PC-3 (cell line): ENCODE measurements at regions of chr22 and their contacts with region 1.

Region 1: GRCh38 chr22:45804986-45805325 is 133.3 kb downstream of the ATXN10 start:
- DNase-seq: peak; percentile 92
- ATAC-seq: peak; percentile 95
- H3K4me3 ChIP-seq: 0 out of 2 replicates have a peak overlapping the region, but pooled peaks have one; percentile 28
- H3K27ac ChIP-seq: peak overlapping the region; percentile 79
- H3K4me1 ChIP-seq: peaks cover 44% of the 10 kb centered on the region
- H3K27me3 ChIP-seq: no peaks in the 10 kb centered on the region
- CTCF ChIP-seq: no peak

Region 2: DNA sequence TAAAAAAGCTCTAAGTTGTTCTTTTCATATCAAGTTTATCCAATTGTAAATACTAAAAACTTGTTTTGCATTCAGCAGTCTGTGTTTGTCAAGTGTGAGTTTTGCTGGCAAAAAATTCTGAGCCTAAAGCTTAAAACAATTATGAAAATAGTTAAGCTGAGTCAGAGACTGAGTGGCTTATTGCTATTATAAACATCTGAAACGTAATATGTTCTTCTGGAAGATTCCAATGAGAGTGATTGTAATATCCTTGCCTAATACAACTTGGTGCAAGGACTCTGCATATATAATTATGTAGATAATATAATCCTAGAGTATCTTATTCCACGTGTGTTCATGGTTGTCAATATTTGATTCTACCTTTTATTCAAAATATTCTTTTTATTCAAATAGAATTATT is 655.3 kb before region 1 on chr22:
- CTCF ChIA-PET with region 1: no interaction called
- POLR2A ChIA-PET with region 1: no interaction called
- intact Hi-C with region 1: no loop called
- DNase-seq: no peak
- ATAC-seq: no peak
- H3K4me3 ChIP-seq: no peak overlapping the region
- H3K27ac ChIP-seq: no peak overlapping the region
- H3K4me1 ChIP-seq: peaks cover 2% of the 10 kb centered on the region
- H3K27me3 ChIP-seq: no peaks in the 10 kb centered on the region
- CTCF ChIP-seq: no peak

Region 3: GRCh38 chr22:45688606-45689080 is 116.3 kb before region 1 on chr22:
- CTCF ChIA-PET with region 1: no interaction called
- POLR2A ChIA-PET with region 1: no interaction called
- intact Hi-C with region 1: loop called (anchors 10 kb)
- DNase-seq: peak; percentile 91
- ATAC-seq: peak; percentile 90
- H3K4me3 ChIP-seq: peak overlapping the region; percentile 11; the same call in 1 of the 2 replicates
- H3K27ac ChIP-seq: peak overlapping the region; percentile 87
- H3K4me1 ChIP-seq: peaks cover 92% of the 10 kb centered on the region
- H3K27me3 ChIP-seq: no peaks in the 10 kb centered on the region
- CTCF ChIP-seq: no peak

Region 4: DNA sequence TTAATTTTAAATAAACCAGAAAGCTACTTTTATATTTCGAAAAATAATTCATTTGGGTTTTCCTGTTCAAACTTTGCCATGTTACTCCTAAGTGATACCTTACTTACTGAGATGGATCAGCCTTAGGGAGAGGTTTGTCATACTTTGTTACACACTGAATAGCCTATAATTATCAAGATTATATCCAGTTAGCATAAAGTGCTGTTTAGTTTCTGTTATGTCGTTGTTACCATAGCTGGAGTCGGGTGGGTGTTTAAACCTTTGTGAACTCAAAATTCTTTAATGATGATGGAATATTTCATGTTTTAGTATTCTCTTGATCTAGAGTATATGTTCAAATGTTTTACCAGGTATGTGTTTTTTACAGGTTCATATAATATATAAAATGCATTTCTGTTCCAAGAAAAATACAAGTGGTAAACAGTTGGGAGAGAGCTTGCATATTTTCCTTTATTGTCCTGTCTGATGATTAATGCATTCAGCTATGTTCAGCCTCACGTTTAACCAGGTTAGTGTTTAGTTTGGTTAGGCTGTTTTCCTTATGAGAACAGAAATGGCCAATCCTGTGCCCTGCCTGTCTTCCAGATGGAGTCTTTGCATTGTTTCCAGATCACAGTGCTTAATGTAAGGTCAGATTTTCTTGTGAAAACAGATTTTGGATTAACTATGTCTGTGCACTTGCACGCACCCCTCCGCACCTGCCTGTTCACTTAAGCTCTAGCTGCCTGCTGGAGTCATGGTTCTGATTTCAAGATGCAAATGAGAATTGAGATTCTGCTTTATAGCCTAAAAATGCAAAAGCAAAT is 27.7 kb before region 1 on chr22:
- CTCF ChIA-PET with region 1: no interaction called
- POLR2A ChIA-PET with region 1: no interaction called
- intact Hi-C with region 1: loop called (anchors 1 kb)
- DNase-seq: peak; percentile 83
- ATAC-seq: peak; percentile 95
- H3K4me3 ChIP-seq: 0 out of 2 replicates have a peak overlapping the region, but pooled peaks have one; percentile 17
- H3K27ac ChIP-seq: peak overlapping the region; percentile 73
- H3K4me1 ChIP-seq: peaks cover 39% of the 10 kb centered on the region
- H3K27me3 ChIP-seq: no peaks in the 10 kb centered on the region
- CTCF ChIP-seq: no peak

Region 5: DNA sequence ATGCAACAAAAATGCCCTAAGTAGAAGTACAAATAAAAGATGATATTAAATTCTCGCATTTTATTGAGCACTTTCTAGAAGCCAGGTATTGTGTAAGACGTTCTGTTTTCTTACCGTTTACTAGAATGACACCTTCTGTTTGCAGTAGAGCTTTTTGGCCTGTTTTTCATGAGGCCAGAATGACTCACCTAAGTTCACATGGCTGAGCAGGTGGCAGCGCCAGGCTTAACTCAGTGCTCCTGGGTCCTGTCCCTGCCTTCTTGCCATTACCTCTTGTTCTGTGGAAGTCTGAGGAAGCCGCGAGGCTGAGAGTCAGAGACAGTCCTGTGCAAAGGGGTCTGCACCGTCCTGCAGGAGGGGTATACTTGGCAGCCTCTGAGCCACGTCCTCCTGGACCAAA is 19.5 kb before region 1 on chr22:
- CTCF ChIA-PET with region 1: no interaction called
- POLR2A ChIA-PET with region 1: interaction called, 3 read pairs
- intact Hi-C with region 1: loop called (anchors 1 kb)
- DNase-seq: peak; percentile 89
- ATAC-seq: peak; percentile 93
- H3K4me3 ChIP-seq: peak overlapping the region; percentile 34; the same call in 1 of the 2 replicates
- H3K27ac ChIP-seq: peak overlapping the region; percentile 92
- H3K4me1 ChIP-seq: peaks cover 53% of the 10 kb centered on the region
- H3K27me3 ChIP-seq: no peaks in the 10 kb centered on the region
- CTCF ChIP-seq: no peak

Region 6: DNA sequence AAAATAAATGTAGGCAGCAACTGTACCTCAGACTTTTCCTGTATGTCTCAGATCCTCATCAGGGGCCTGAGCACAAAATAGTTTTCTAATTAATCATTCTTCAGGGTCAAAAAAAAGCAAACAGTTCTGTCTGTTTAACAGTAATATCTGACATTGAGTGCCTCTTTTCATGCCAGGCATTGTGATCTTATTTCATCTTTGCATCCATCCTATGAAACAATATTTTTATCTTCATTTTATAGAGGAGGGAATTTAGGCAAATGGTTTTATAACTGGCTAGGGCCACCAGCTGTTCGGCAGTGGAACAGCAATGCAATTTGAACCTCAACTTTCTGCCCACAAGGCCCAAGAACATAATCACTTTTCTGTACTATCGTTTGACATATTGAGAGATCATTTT is 26.4 kb after region 1 on chr22:
- CTCF ChIA-PET with region 1: no interaction called
- POLR2A ChIA-PET with region 1: no interaction called
- intact Hi-C with region 1: loop called (anchors 1 kb)
- DNase-seq: peak; percentile 62
- ATAC-seq: peak; percentile 70
- H3K4me3 ChIP-seq: no peak overlapping the region
- H3K27ac ChIP-seq: peak overlapping the region; percentile 79
- H3K4me1 ChIP-seq: peaks cover 26% of the 10 kb centered on the region
- H3K27me3 ChIP-seq: no peaks in the 10 kb centered on the region
- CTCF ChIP-seq: peak; percentile 71